ENCODE measurements at regions of chr12 and their contacts with region 1.

Region 1: GRCh38 chr12:55619354-55620138 is 17.1 kb upstream of the OR10P1 start:
- DNase-seq: peak; percentile 77 to 92
- H3K4me3 ChIP-seq: no peak overlapping the region
- H3K4me1 ChIP-seq: no peaks in the 10 kb centered on the region
- H3K27me3 ChIP-seq: 0 out of 2 replicates have a peak, but pooled peaks cover 3% of the 10 kb centered on the region

Region 2: GRCh38 chr12:55194382-55194781 is 425.2 kb before region 1 on chr12:
- in situ Hi-C with region 1: loop called (anchors 10 kb)
- DNase-seq: no peak
- H3K4me3 ChIP-seq: no peak overlapping the region
- H3K4me1 ChIP-seq: no peaks in the 10 kb centered on the region
- H3K27me3 ChIP-seq: no peaks in the 10 kb centered on the region